ENCODE measurements at regions of chr3 and their contacts with region 1.

Region 1: GRCh38 chr3:180912304-180913296 is at the start of gene FXR1:
- DNase-seq: peak; percentile 89 to 93
- ATAC-seq: peak; percentile 90 to 96 (median 93)
- H3K4me3 ChIP-seq: peak within 1 kb of the TSS; percentile 89
- H3K4me3 Mint-ChIP-seq: peak within 1 kb of the TSS; percentile 97
- H3K27ac ChIP-seq: peak within 1 kb of the TSS; percentile 83
- H3K27ac Mint-ChIP-seq: peak within 1 kb of the TSS; percentile 96 to 97
- H3K4me1 ChIP-seq: peaks cover 9% of the 10 kb centered on the region
- H3K4me1 Mint-ChIP-seq: peaks cover 39 to 46% of the 10 kb centered on the region in 2 donors
- H3K27me3 ChIP-seq: no peaks in the 10 kb centered on the region
- H3K27me3 Mint-ChIP-seq: peaks cover 0 to 3% of the 10 kb centered on the region in 2 donors
- CTCF ChIP-seq: peak; percentile 46
- total RNA-seq, gene FXR1: 135 to 149 (median 148) TPM

Region 2: DNA sequence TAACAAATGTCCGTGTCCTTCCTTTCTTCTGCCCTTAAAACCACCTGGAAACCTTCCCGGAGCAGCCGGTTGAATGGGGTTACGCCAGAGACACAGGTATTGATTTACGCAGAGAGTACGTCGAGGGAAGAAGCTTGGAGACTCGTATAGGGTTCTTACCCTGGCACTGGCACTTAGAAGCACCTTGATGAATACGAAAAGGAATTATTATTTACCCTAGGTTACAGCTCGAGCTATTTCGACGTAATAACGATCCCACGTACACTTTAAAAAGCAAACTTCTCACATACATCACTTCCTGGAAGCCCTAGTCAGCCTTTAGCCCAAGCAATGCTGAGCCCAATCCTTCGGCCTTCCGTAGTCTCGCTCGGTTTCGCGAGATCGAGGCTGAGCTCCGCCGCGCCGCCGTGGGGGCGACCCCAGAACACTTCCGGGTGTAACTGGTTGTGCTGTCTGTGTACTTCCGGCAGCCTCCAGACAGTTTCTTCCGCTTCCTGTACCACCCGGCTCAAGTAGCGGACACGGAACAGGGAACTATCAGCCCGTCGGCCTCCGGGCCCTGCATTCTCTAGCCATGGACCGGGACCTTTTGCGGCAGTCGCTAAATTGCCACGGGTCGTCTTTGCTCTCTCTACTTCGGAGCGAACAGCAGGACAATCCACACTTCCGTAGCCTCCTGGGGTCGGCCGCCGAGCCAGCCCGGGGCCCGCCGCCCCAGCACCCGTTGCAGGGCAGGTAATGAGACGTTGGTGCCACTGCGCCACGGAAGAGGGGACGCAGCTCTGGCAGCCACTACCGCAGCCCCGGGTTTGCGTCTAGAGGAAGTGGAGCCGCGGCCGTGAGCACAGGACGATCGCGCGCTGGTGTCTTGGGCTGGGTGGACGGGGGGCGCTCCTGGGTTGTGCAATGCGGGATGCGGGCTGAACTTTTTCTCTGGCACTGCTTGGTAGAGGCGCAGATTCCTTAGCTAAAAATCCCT is 310.6 kb before region 1 on chr3 and contains the start of gene TTC14:
- intact Hi-C with region 1: loop called (anchors 5 kb)
- DNase-seq: peak; percentile 84 to 97
- ATAC-seq: peak; percentile 93 to 98 (median 93)
- H3K4me3 ChIP-seq: peak within 1 kb of the TSS; percentile 60
- H3K4me3 Mint-ChIP-seq: peak within 1 kb of the TSS; percentile 97
- H3K27ac ChIP-seq: peak within 1 kb of the TSS; percentile 90
- H3K27ac Mint-ChIP-seq: peak within 1 kb of the TSS; percentile 97 to 98
- H3K4me1 ChIP-seq: peaks cover 5% of the 10 kb centered on the region
- H3K4me1 Mint-ChIP-seq: peaks cover 23 to 26% of the 10 kb centered on the region in 2 donors
- H3K27me3 ChIP-seq: peaks cover under 1% of the 10 kb centered on the region
- H3K27me3 Mint-ChIP-seq: peaks cover 20 to 29% of the 10 kb centered on the region in 2 donors
- CTCF ChIP-seq: no peak
- total RNA-seq, gene TTC14: 92.9 to 115 (median 112) TPM

Region 3: DNA sequence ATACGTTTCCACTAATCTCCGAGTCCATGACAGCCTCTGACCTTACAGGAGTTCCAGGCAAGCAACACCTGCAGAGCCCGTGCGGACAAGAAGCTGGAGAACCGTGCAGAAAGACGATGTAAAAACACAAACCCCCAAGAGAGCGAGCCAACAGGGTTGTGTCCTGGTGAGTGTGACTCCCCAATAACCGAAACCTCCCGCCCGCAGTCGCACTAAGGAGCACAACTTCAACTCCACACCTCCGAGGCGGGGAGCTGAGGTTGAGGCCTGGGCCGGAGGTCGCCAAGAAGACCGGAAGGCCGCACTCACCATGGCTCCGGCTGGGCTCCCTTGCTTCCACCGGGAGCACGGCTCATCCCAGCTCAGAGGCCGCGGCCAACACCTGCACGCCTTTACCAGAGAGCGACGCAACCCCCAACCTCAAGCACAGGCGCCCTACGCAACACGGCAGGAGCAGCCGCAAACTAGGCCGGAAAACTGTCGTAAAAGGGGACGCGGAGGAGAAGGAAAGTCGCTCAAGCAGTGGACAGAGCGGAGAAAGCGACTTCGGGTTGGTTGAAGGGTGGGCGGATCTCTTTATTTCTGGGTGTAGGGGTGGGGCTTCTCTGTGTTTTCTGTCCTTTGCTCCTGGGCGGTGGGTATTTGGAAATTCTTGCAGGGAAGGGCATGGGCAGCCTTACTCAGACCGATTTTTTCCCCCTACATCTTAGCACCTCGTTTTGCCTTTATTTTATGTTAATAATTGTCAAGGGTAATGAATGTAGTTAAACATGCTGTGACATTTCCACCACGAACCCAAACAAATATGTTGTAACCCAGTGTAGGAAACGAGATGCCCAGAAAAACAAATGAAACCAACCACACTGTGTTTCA is 76.9 kb after region 1 on chr3 and contains the start of gene DNAJC19:
- intact Hi-C with region 1: loop called (anchors 1 kb)
- DNase-seq: peak; percentile 80 to 96
- ATAC-seq: peak; percentile 95 to 99 (median 97)
- H3K4me3 ChIP-seq: peak within 1 kb of the TSS; percentile 78
- H3K4me3 Mint-ChIP-seq: peak within 1 kb of the TSS; percentile 99
- H3K27ac ChIP-seq: peak within 1 kb of the TSS; percentile 73
- H3K27ac Mint-ChIP-seq: peak within 1 kb of the TSS; percentile 89 to 93
- H3K4me1 ChIP-seq: peaks cover 7% of the 10 kb centered on the region
- H3K4me1 Mint-ChIP-seq: peaks cover 25 to 26% of the 10 kb centered on the region in 2 donors
- H3K27me3 ChIP-seq: no peaks in the 10 kb centered on the region
- H3K27me3 Mint-ChIP-seq: peaks cover 0 to 9% of the 10 kb centered on the region in 2 donors
- CTCF ChIP-seq: no peak
- total RNA-seq, gene DNAJC19: 18.9 to 25.8 (median 22.2) TPM

Measured in natural killer cell (primary cell).